ENCODE measurements at regions of chr17 and their contacts with region 1.

Region 1: GRCh38 chr17:63406689-63407330 is 39.3 kb downstream of the CYB561 start:
- DNase-seq: no peak
- H3K4me3 ChIP-seq: no peak overlapping the region
- H3K27ac ChIP-seq: no peak overlapping the region
- H3K4me1 ChIP-seq: no peaks in the 10 kb centered on the region
- H3K27me3 ChIP-seq: no peaks in the 10 kb centered on the region
- CTCF ChIP-seq: peak; percentile 92

Region 2: GRCh38 chr17:62995377-62995885 is 411.4 kb before region 1 on chr17:
- intact Hi-C with region 1: loop called (anchors 10 kb)
- DNase-seq: no peak
- H3K4me3 ChIP-seq: no peak overlapping the region
- H3K27ac ChIP-seq: no peak overlapping the region
- H3K4me1 ChIP-seq: peaks cover 15% of the 10 kb centered on the region
- H3K27me3 ChIP-seq: no peaks in the 10 kb centered on the region
- CTCF ChIP-seq: peak; percentile 60

Region 3: GRCh38 chr17:63075969-63076368 is 330.8 kb before region 1 on chr17:
- intact Hi-C with region 1: loop called (anchors 5 kb)
- DNase-seq: no peak
- H3K4me3 ChIP-seq: no peak overlapping the region
- H3K27ac ChIP-seq: no peak overlapping the region
- H3K4me1 ChIP-seq: no peaks in the 10 kb centered on the region
- H3K27me3 ChIP-seq: no peaks in the 10 kb centered on the region
- CTCF ChIP-seq: no peak

Region 4: DNA sequence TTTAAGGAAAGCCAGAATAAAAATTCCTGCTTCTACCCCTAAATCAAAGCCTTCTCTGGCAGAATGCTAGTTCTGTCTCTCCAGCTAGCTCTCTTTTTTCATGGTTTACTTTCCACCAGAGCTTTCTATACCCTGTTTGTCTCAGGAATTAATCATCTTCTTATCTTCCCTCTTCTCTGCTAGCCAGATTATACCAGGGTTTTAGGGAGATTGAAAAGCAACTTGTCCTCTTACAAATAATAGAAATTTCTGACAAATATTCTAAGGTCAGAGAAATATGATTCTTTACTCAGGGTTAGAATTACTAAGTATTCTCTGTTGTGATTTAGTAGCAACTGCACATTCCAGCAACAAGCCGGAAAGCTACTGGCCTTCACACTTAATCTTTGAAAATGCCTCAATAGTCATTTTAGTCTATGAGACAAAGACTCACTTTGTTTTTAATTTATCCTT is 274.3 kb before region 1 on chr17:
- intact Hi-C with region 1: no loop called
- DNase-seq: no peak
- H3K4me3 ChIP-seq: no peak overlapping the region
- H3K27ac ChIP-seq: no peak overlapping the region
- H3K4me1 ChIP-seq: no peaks in the 10 kb centered on the region
- H3K27me3 ChIP-seq: no peaks in the 10 kb centered on the region
- CTCF ChIP-seq: no peak

Measured in left ventricle myocardium inferior (tissue), 1 donor.